Heart right ventricle (tissue), 16 donors: ENCODE measurements at regions of chr4 and their contacts with region 1.

Region 1: DNA sequence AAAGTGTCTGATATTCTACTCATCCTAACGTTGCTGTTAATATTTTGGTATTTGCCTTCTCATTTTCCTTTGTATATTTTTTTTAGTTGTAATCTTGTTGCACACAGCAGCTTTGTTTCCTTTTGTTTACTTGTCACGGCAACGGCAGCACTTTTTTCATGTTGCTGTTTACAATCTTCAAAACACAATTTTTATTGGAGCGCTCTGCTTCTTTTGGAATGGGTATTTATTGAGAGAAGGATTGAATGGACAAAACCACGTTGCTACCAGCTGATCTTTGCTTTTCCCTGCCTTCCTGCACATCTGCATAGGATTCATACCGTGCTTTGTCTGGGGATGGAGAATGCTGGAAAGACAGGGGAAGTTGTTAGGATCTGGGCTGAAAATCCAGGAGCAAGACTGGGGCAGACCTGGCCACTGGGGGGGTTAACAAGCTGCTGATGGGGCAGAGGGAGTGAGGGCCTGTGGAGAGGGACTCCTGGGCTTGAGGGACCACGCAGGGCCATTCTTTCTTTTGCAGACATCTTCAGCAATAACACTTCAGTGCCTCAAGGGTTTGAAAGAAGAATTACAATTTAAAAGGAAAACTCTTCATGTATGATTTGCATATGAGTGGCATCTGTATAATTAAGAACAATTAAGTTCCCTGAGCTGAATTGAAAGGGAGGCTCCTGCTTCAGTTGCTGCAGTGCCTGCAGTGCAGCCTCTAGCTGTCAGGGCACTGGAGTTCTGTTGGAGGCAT is 69.8 kb downstream of the TMEM131L start:
- DNase-seq: no peak
- ATAC-seq: peak in 1 of 8 donors; percentile 8
- H3K4me3 ChIP-seq: no peak overlapping the region
- H3K27ac ChIP-seq: no peak overlapping the region
- H3K4me1 ChIP-seq: peaks cover 6 to 95% (median 62%) of the 10 kb centered on the region in 9 donors
- H3K27me3 ChIP-seq: no peaks in the 10 kb centered on the region
- CTCF ChIP-seq: no peak

Region 2: DNA sequence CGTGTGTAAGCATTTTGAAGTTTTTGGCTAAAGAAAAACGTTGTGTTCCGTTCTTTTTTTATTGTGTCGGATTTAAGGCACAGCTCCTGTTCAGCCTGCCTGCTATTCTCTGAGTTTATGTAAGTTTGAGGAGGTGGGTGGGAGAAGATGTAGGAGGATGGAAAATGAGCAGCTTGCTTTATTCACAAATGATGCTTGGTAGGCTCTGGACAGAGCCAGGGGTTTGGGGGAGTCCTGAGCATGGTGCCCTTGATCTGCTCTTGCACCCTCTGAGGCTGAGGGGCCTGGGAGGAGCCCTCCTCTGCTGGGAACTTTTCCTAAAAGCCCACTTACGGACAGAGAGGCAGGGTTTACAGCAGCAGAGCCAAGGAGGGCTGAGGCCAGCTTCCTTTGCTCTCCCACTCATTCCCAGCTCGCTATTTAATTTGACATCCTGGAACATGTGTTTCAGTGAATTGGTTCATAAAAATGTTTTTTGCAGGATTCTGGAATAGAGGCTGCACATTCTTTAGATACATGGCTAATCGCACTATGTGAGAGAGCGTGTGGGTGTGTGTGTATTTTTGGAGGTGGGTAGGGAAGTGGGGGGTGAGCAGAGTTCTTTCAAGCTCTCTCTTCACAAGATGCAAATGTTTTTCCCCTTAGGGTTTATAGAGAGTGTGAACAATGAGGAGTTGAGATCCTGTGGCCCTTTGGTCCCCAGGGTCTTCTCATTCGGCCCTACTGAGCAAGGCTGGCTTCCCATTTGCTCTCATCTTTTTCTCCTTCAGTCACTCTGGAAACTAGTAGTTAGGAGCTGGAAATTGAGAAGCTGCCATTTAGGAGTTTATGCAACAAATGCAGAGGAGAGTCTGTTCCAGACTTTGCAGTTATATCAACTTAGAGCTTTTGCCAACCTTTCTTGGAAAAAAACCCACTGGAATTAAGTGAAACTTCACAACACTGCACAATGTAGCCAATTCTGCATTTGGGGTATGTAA is 37.7 kb before region 1 on chr4:
- intact Hi-C with region 1: loop called in 2 of 10 experiments (anchors 5 kb)
- DNase-seq: no peak
- ATAC-seq: peak; percentile 45 to 77 (median 65)
- H3K4me3 ChIP-seq: peak overlapping the region in 1 of 10 donors; percentile 17
- H3K27ac ChIP-seq: peak overlapping the region in 9 of 10 donors; percentile 7 to 77 (median 64)
- H3K4me1 ChIP-seq: peaks cover 0 to 73% (median 38%) of the 10 kb centered on the region in 9 donors
- H3K27me3 ChIP-seq: no peaks in the 10 kb centered on the region
- CTCF ChIP-seq: no peak

Region 3: DNA sequence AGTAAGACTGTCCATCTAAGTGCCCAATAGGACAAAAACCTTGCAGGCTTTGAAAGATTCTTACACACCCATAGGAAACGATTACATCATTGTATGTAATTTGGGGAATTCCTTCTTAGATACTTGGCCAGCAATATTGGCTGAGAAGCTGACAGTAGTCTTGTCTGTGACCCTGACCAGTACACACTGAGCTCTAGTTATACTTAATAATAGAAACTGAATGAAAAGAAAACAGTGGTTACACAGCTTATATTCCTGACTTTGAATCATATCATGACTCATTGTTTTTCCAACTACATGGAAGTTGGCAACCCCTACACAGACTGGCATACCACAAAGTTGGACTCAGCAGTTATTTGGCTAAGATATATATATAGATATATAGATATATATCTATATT is 141.1 kb after region 1 on chr4:
- intact Hi-C with region 1: no loop called
- DNase-seq: no peak
- ATAC-seq: peak in 3 of 8 donors; percentile 24 to 58 (median 30)
- H3K4me3 ChIP-seq: no peak overlapping the region
- H3K27ac ChIP-seq: peak overlapping the region in 1 of 10 donors; percentile 12
- H3K4me1 ChIP-seq: peaks cover 0 to 15% (median 0%) of the 10 kb centered on the region in 9 donors
- H3K27me3 ChIP-seq: no peaks in the 10 kb centered on the region
- CTCF ChIP-seq: no peak

Region 4: GRCh38 chr4:154406018-154406795 is 870.3 kb after region 1 on chr4:
- intact Hi-C with region 1: no loop called
- DNase-seq: no peak
- ATAC-seq: no peak
- H3K4me3 ChIP-seq: no peak overlapping the region
- H3K27ac ChIP-seq: no peak overlapping the region
- H3K4me1 ChIP-seq: no peaks in the 10 kb centered on the region
- H3K27me3 ChIP-seq: peaks cover 0 to 8% (median 0%) of the 10 kb centered on the region in 7 donors
- CTCF ChIP-seq: no peak